ENCODE measurements at regions of chr3 and their contacts with region 1.

Region 1: GRCh38 chr3:16177962-16178627 is 3.6 kb downstream of the GALNT15 start:
- DNase-seq: peak; percentile 56 to 77
- ATAC-seq: peak; percentile 12 to 47
- H3K4me3 ChIP-seq: peak overlapping the region; percentile 51 to 66 (median 64)
- H3K27ac ChIP-seq: peak overlapping the region in 3 of 4 donors; percentile 77 to 84 (median 82)
- H3K4me1 ChIP-seq: peaks cover 10 to 33% of the 10 kb centered on the region in 2 donors
- H3K27me3 ChIP-seq: no peaks in the 10 kb centered on the region
- CTCF ChIP-seq: peak; percentile 94 to 99 (median 97)
- POLR2A ChIP-seq: no peak

Region 2: DNA sequence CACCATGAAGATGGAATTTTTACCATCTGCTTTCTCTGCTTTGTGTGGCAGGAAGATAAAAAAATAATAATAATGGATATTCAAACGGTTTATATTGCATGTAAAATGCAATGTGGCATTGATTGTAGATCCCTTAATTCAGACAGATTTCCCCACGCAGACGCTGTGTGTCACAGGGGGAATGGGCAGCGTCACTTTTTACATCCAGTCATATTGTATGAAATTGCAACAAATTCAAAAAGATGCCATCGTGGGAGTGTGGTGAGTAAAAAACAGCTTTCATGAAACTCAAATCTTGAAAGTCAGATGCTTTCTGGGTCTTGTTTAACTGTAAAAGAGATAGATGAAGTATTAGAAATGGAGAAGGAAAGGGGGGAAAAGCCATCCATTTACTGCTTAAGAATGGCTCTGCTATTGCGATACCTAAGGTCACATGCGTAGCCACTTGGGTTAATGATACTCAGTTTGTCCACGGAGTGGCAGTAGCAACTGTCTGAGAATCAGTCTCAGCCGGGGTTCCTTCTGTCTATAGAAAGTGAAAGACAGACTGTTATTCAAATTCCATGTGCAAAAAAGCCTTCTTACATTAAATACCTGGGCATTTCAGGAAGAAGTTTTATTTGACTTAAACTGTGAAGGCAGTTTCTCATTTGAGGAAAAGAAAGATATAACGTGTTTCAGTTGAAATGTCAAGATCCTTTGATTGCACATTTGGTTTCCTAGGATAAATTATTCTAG is 548.1 kb before region 1 on chr3:
- in situ Hi-C with region 1: no loop called
- intact Hi-C with region 1: loop called (anchors 5 kb)
- DNase-seq: peak; percentile 69 to 76
- ATAC-seq: peak; percentile 91 to 93
- H3K4me3 ChIP-seq: peak overlapping the region; percentile 24 to 50 (median 37)
- H3K27ac ChIP-seq: peak overlapping the region; percentile 77 to 90 (median 84)
- H3K4me1 ChIP-seq: peaks cover 25 to 27% of the 10 kb centered on the region in 2 donors
- H3K27me3 ChIP-seq: no peaks in the 10 kb centered on the region
- CTCF ChIP-seq: peak; percentile 77 to 85 (median 78)
- POLR2A ChIP-seq: no peak

Region 3: DNA sequence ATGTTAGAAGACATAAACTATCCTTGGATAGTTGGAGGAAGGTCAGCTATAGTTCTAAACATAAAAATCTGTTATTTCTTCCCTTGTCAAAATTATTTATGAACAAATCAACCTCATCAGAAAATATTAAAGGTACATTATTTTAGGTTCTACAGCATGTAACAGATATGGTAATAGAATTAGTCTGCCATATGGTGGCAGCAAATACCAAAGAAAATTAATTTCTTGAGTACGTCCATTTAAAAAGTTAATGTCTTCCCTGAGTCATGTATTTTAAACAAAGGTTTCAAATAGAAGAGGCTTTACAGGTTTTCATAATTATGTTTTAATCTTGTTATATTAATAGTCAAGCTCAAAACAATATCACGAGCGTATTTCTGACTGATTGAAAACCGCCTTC is 362.4 kb before region 1 on chr3:
- in situ Hi-C with region 1: loop called in 1 of 4 experiments (anchors 25 kb)
- intact Hi-C with region 1: loop called (anchors 5 kb)
- DNase-seq: no peak
- ATAC-seq: peak; percentile 74 to 85
- H3K4me3 ChIP-seq: no peak overlapping the region
- H3K27ac ChIP-seq: peak overlapping the region in 2 of 4 donors; percentile 37 to 42
- H3K4me1 ChIP-seq: peaks cover 8 to 18% of the 10 kb centered on the region in 2 donors
- H3K27me3 ChIP-seq: no peaks in the 10 kb centered on the region
- CTCF ChIP-seq: peak in 3 of 5 experiments; percentile 43 to 78 (median 55)
- POLR2A ChIP-seq: no peak

Region 4: GRCh38 chr3:15892311-15893227 is 285.5 kb before region 1 on chr3:
- in situ Hi-C with region 1: no loop called
- intact Hi-C with region 1: no loop called
- DNase-seq: no peak
- ATAC-seq: no peak
- H3K4me3 ChIP-seq: no peak overlapping the region
- H3K27ac ChIP-seq: peak overlapping the region in 3 of 4 donors; percentile 85 to 90 (median 87)
- H3K4me1 ChIP-seq: peaks cover 21 to 22% of the 10 kb centered on the region in 2 donors
- H3K27me3 ChIP-seq: no peaks in the 10 kb centered on the region
- CTCF ChIP-seq: no peak
- POLR2A ChIP-seq: no peak

Region 5: DNA sequence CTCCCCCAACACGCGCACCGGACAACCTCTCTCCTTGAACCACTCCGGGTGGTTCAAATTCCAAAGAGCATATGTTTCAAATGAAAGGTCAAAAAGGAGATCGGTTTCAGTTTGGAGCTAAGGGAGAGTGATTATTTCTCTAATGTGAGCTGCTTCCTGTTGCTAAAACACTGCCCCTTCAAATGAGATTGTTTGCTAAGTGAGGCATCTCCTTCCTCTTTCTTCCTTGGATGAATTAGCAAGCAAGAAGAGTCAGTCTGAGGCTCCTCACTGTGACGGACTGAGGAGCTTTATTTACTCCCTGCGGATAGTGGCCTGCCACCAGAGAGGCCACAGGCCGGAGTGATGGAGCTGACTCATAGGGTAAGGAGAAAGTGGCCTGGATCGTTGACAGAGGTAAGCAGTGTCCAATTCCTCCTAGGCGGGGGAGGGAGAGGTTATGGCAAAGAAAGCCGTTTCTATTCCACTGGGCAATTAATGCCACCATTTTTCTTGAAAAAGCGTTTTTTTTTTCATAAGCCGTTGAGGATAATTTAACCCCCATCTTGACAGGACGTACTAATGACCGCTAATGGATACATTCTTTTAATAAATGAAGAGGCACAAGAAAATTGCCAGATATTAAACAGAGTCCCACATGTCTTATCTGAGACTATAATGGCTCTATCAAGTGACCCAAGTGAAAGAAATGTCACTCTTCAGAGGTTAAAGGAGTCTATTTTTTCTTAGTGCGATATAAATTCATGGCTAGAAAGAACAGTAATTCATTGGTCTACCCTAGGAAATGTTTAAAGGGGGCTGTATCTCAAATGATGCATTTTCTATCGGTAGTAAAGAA is 213.3 kb before region 1 on chr3:
- in situ Hi-C with region 1: no loop called
- intact Hi-C with region 1: no loop called
- DNase-seq: peak; percentile 88 to 93
- ATAC-seq: peak; percentile 97 to 99
- H3K4me3 ChIP-seq: peak overlapping the region; percentile 14 to 41 (median 26)
- H3K27ac ChIP-seq: peak overlapping the region; percentile 85 to 93 (median 90)
- H3K4me1 ChIP-seq: peaks cover 21% of the 10 kb centered on the region in 2 donors
- H3K27me3 ChIP-seq: no peaks in the 10 kb centered on the region
- CTCF ChIP-seq: no peak
- POLR2A ChIP-seq: peak; percentile 64 to 83

Region 6: DNA sequence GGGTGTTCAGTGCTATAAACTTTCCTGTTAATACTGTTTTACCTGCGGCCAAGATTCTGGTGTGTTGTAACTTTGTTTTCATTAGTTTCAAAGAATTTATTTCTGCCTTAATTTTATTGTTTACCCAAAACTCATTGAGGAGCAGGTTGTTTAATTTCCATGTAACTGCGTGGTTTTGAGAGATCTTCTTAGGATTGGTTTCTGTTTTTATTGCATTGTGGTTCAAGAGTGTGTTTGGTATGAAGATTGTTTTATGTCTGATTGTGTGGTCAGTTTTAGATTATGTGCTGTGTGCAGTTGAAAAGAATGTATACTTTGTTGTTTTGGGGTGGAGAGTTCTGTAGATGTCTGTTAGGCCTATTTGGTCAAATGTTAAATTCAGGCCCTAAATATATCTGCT is 137.1 kb before region 1 on chr3:
- in situ Hi-C with region 1: loop called in 1 of 4 experiments (anchors 5 kb)
- intact Hi-C with region 1: no loop called
- DNase-seq: no peak
- ATAC-seq: no peak
- H3K4me3 ChIP-seq: no peak overlapping the region
- H3K27ac ChIP-seq: peak overlapping the region in 1 of 4 donors; percentile 35
- H3K4me1 ChIP-seq: no peaks in the 10 kb centered on the region
- H3K27me3 ChIP-seq: no peaks in the 10 kb centered on the region
- CTCF ChIP-seq: no peak
- POLR2A ChIP-seq: no peak

Region 7: DNA sequence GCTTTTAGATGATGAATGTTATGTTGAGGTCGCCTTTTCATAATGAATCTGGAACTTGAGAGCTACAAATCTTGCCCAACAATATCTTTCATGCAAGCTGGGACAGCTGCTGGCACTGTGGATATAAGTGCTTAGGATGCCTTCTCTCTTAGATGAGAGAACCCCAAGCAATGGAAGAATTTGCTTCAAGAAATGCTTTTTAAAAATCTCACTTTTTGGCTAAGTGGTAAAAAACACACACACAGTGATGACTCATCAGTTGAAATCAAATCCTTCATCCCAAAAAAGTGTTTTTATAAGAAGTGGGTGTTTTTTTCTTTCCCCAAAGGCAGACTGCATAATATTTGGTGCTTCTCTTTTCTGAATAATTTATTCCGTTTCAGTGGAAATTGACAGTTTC is 42.0 kb before region 1 on chr3:
- in situ Hi-C with region 1: no loop called
- intact Hi-C with region 1: loop called (anchors 5 kb)
- DNase-seq: peak in 1 of 2 donors; percentile 60
- ATAC-seq: peak; percentile 51 to 68
- H3K4me3 ChIP-seq: no peak overlapping the region
- H3K27ac ChIP-seq: peak overlapping the region; percentile 59 to 72 (median 66)
- H3K4me1 ChIP-seq: peaks cover 40 to 55% of the 10 kb centered on the region in 2 donors
- H3K27me3 ChIP-seq: no peaks in the 10 kb centered on the region
- CTCF ChIP-seq: no peak
- POLR2A ChIP-seq: peak in 1 of 2 donors; percentile 34

Region 8: GRCh38 chr3:16370872-16371740 is 193.0 kb after region 1 on chr3:
- in situ Hi-C with region 1: no loop called
- intact Hi-C with region 1: no loop called
- DNase-seq: no peak
- ATAC-seq: peak; percentile 40 to 58
- H3K4me3 ChIP-seq: no peak overlapping the region
- H3K27ac ChIP-seq: peak overlapping the region; percentile 19 to 65 (median 56)
- H3K4me1 ChIP-seq: peaks cover 46 to 51% of the 10 kb centered on the region in 2 donors
- H3K27me3 ChIP-seq: no peaks in the 10 kb centered on the region
- CTCF ChIP-seq: no peak
- POLR2A ChIP-seq: peak in 1 of 2 donors; percentile 8

Region 9: GRCh38 chr3:16467393-16467792 is 289.3 kb after region 1 on chr3:
- in situ Hi-C with region 1: no loop called
- intact Hi-C with region 1: no loop called
- DNase-seq: no peak
- ATAC-seq: no peak
- H3K4me3 ChIP-seq: no peak overlapping the region
- H3K27ac ChIP-seq: peak overlapping the region in 2 of 4 donors; percentile 43 to 71
- H3K4me1 ChIP-seq: peaks cover 0 to 30% of the 10 kb centered on the region in 2 donors
- H3K27me3 ChIP-seq: no peaks in the 10 kb centered on the region
- CTCF ChIP-seq: no peak
- POLR2A ChIP-seq: no peak